ENCODE measurements at regions of chr1 and their contacts with region 1.

Region 1: DNA sequence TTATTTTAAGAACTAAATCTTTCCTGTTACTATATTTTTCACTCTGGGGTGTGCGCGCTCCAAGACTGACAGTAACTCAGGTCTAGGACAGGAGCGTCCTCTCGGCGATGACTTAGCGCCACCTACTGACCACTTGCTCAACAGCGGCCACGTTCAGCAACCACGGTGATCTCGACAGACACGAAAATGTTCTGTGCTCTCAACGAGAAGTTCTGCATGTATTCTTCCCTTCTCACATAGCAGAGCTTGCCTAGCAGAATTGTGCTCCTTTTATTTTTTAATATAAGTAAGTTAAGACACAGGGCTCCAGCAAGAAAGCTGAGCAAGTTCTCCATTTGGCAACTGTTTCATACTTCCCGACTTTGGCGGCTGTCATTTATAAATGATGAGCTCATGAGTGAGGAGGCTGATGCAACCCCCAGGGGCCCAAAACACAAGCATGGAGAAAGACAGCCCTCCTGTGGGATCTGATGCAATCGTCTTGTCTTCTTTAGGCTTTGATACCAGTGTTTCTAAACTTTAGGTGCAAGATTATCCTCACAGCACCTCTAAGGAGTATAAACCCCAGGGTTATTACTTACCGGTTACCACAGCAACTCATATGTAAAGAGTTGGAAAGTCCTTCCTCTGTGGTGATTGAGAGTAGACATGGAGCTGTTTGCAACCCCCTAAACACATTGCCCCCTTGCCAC is 92.6 kb downstream of the HHIPL2 start:
- DNase-seq: peak; percentile 75 to 89 (median 86)
- H3K4me3 ChIP-seq: peak overlapping the region in 5 of 7 experiments; percentile 7 to 58 (median 29)
- H3K27ac ChIP-seq: peak overlapping the region in 1 of 2 experiments; percentile 45
- H3K4me1 ChIP-seq: peaks cover 0 to 10% (median 5%) of the 10 kb centered on the region in 4 experiments
- H3K27me3 ChIP-seq: peaks cover 0 to 3% (median 0%) of the 10 kb centered on the region in 5 experiments

Region 2: GRCh38 chr1:221478050-221478949 is 977.0 kb before region 1 on chr1:
- CTCF ChIA-PET with region 1: interaction called, 17 read pairs
- POLR2A ChIA-PET with region 1: no interaction called
- DNase-seq: peak; percentile 48 to 73 (median 70)
- H3K4me3 ChIP-seq: no peak overlapping the region
- H3K27ac ChIP-seq: no peak overlapping the region
- H3K4me1 ChIP-seq: peaks cover 0 to 6% (median under 1%) of the 10 kb centered on the region in 4 experiments
- H3K27me3 ChIP-seq: no peaks in the 10 kb centered on the region

Region 3: GRCh38 chr1:221933814-221934213 is 521.5 kb before region 1 on chr1:
- CTCF ChIA-PET with region 1: no interaction called
- POLR2A ChIA-PET with region 1: no interaction called
- DNase-seq: no peak
- H3K4me3 ChIP-seq: no peak overlapping the region
- H3K27ac ChIP-seq: no peak overlapping the region
- H3K4me1 ChIP-seq: no peaks in the 10 kb centered on the region
- H3K27me3 ChIP-seq: no peaks in the 10 kb centered on the region

Region 4: GRCh38 chr1:222288040-222288439 is 167.3 kb before region 1 on chr1:
- CTCF ChIA-PET with region 1: no interaction called
- POLR2A ChIA-PET with region 1: no interaction called
- DNase-seq: no peak
- H3K4me3 ChIP-seq: no peak overlapping the region
- H3K27ac ChIP-seq: no peak overlapping the region
- H3K4me1 ChIP-seq: peaks cover 0 to 10% (median 2%) of the 10 kb centered on the region in 4 experiments
- H3K27me3 ChIP-seq: no peaks in the 10 kb centered on the region

Region 5: DNA sequence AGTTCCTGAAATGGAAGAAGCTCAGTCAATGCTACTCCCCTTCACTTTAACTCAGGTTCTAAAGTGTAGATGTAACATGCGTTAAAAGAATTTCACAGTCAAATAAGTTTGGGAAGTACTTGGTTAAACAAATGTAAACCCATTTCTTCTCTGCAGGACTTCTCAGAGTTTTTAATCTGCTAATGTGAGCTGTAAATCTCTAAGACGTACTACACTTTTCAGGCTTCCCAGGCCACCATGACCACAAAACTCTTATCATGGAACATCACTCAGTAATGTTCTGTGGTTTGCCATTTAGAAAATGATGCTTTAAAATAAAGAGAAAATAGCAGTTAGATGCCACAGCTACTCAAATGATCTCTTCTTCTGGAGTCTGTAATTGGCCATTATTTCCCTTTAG is 11.8 kb before region 1 on chr1:
- CTCF ChIA-PET with region 1: interaction called, 10 read pairs
- POLR2A ChIA-PET with region 1: no interaction called
- DNase-seq: peak; percentile 38 to 78 (median 70)
- H3K4me3 ChIP-seq: no peak overlapping the region
- H3K27ac ChIP-seq: no peak overlapping the region
- H3K4me1 ChIP-seq: peaks cover 0 to 2% (median 0%) of the 10 kb centered on the region in 4 experiments
- H3K27me3 ChIP-seq: no peaks in the 10 kb centered on the region

Region 6: DNA sequence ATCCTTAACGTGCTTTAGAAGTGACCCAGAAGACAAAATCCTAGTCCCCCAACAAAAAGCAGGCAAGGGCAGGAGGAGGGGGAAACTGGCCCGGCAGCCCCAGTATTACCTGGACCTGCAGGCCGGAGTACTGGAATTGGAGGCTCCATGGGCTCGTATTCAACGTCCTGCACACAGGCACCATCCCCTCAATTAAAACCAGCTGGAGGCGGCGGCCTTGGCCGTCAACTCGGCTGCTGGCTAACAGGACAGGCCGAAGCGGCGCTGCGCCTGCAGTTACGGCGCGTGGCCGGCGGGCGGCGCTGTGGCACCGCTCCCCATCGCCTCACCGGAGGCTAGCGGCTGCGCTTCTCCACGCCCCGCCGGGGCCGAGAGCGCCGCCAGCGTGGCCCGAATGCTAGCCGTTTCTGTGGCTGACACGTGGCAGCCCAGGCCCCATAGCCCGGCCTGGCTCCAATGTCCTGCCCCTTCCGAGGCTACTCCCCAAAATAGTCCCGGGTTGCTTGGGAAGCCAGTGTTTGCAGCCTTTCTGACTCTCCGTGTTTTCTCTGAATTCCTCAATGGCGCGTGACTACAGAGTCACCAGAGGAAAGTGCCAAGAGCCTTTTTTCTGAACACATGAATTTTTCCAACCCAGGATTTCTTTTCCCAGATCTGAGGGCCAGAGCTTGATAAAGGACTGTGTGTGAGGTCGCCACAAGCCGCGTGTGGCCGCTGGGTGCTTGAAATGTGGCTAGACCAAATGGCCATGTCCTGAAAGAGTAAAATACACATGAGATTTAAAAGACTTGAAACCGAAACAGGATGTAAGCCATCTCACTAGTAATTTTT is 10.1 kb after region 1 on chr1:
- CTCF ChIA-PET with region 1: interaction called, 23 read pairs
- POLR2A ChIA-PET with region 1: no interaction called
- DNase-seq: peak; percentile 83 to 93 (median 92)
- H3K4me3 ChIP-seq: peak overlapping the region; percentile 33 to 84 (median 74)
- H3K27ac ChIP-seq: peak overlapping the region; percentile 74 to 80
- H3K4me1 ChIP-seq: peaks cover 0 to 7% (median 3%) of the 10 kb centered on the region in 4 experiments
- H3K27me3 ChIP-seq: no peaks in the 10 kb centered on the region

Region 7: DNA sequence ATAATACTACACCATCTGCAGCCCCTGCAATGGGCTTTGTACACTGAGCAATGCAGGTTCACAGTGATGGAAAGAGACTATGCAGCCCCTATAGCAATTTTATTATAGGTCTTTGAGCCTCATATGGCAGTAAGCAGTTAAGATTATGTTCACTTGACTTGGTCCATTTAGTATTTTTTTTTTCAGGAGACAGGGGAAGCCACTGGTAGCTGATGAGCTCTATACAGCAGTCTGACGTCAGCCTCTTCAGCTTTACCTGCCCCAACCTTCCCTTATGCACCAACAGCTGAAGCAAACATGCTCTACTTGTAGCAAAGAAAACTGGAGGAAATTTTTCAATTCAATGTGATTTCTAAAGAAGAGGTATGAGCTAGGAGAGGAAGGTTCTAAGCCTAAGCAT is 224.7 kb after region 1 on chr1:
- CTCF ChIA-PET with region 1: no interaction called
- POLR2A ChIA-PET with region 1: no interaction called
- DNase-seq: no peak
- H3K4me3 ChIP-seq: no peak overlapping the region
- H3K27ac ChIP-seq: no peak overlapping the region
- H3K4me1 ChIP-seq: no peaks in the 10 kb centered on the region
- H3K27me3 ChIP-seq: no peaks in the 10 kb centered on the region